IMR-90 (cell line): ENCODE measurements at regions of chr14 and their contacts with region 1.

Region 1: DNA sequence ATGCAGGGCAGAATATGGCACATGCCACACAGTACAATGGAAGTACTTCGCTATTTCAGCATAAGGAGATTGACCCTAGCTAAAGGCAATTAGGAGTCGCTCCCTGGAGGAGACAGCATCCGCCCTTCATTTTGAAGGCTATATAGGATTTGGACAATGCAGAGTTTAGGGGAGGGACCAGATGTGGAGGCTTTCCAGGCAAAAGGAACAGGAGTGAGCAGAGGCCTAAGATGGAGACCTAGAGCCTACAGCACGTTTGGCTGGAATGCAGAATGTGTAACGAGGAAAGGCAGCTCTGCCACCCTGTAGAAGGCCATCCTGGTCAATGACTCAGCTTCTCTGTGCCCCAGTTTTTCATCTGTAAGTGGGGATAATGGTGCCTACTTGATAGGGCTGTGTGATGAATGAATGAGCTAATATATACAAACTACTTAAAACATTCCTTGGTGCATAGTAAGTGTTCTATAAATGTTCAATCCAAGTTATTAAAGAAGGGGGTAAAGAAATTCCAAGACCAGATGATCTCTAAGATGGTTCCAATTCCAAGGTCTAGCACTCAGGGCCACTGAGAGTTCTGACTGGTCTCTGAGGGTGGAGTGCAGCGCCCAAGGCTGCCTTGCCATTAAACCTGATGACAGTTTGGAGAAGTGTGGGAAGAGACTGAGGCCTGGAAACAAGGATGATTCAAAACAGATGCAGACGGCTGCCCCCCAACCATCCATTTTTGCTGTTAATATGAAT is 54.3 kb upstream of the FRMD6 start:
- DNase-seq: peak; percentile 79
- ATAC-seq: peak; percentile 72
- H3K4me3 ChIP-seq: no peak overlapping the region
- H3K27ac ChIP-seq: peak overlapping the region; percentile 46
- H3K4me1 ChIP-seq: peaks cover 15% of the 10 kb centered on the region
- H3K27me3 ChIP-seq: no peaks in the 10 kb centered on the region
- CTCF ChIP-seq: no peak
- POLR2A ChIP-seq: no peak
- RAD21 ChIP-seq: 0 out of 2 replicates have a peak, but pooled peaks have one; percentile 6

Region 2: DNA sequence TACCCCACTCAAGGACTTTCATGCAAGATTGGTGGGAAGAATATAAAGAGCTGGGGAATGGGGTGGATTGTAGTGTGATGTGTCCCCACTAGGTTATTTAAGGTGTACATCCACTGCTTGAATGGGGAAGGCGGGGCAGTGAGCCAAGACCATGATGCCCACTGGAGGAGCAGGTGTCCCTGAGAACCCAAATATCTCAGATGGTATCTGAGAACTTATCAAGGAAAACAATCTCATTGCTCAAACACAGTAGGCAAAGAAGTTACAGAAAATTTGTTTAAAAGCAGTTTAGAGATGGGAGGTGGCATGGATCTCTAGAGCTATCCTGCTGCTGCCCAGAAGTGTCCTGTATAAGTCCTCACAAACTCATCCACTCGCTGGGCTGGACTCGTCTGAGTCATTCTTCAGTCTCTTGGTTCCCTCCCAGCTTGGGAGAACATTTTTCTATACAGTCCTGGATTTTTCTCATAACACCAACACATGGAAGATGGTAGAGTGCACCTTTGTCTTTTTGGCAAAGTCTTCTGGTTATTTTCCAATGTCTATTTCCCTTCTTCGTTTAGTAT is 1042.9 kb before region 1 on chr14:
- CTCF ChIA-PET with region 1: no interaction called
- POLR2A ChIA-PET with region 1: no interaction called
- dilution Hi-C with region 1: no loop called
- in situ Hi-C with region 1: no loop called
- intact Hi-C with region 1: no loop called
- DNase-seq: no peak
- ATAC-seq: no peak
- H3K4me3 ChIP-seq: no peak overlapping the region
- H3K27ac ChIP-seq: no peak overlapping the region
- H3K4me1 ChIP-seq: no peaks in the 10 kb centered on the region
- H3K27me3 ChIP-seq: no peaks in the 10 kb centered on the region; the same call in 1 of the 2 replicates
- CTCF ChIP-seq: no peak
- POLR2A ChIP-seq: no peak
- RAD21 ChIP-seq: no peak

Region 3: GRCh38 chr14:51582437-51582836 is 15.0 kb before region 1 on chr14:
- CTCF ChIA-PET with region 1: interaction called, 3 read pairs
- POLR2A ChIA-PET with region 1: no interaction called
- dilution Hi-C with region 1: no loop called
- in situ Hi-C with region 1: no loop called
- intact Hi-C with region 1: loop called (anchors 2 kb)
- DNase-seq: peak; percentile 31
- ATAC-seq: no peak
- H3K4me3 ChIP-seq: no peak overlapping the region
- H3K27ac ChIP-seq: 0 out of 2 replicates have a peak overlapping the region, but pooled peaks have one; percentile 33
- H3K4me1 ChIP-seq: peaks cover 10% of the 10 kb centered on the region
- H3K27me3 ChIP-seq: no peaks in the 10 kb centered on the region
- CTCF ChIP-seq: no peak
- POLR2A ChIP-seq: no peak
- RAD21 ChIP-seq: no peak